CD4-positive, alpha-beta memory T cell (primary cell): ENCODE measurements at regions of chr12 and their contacts with region 1.

Region 1: DNA sequence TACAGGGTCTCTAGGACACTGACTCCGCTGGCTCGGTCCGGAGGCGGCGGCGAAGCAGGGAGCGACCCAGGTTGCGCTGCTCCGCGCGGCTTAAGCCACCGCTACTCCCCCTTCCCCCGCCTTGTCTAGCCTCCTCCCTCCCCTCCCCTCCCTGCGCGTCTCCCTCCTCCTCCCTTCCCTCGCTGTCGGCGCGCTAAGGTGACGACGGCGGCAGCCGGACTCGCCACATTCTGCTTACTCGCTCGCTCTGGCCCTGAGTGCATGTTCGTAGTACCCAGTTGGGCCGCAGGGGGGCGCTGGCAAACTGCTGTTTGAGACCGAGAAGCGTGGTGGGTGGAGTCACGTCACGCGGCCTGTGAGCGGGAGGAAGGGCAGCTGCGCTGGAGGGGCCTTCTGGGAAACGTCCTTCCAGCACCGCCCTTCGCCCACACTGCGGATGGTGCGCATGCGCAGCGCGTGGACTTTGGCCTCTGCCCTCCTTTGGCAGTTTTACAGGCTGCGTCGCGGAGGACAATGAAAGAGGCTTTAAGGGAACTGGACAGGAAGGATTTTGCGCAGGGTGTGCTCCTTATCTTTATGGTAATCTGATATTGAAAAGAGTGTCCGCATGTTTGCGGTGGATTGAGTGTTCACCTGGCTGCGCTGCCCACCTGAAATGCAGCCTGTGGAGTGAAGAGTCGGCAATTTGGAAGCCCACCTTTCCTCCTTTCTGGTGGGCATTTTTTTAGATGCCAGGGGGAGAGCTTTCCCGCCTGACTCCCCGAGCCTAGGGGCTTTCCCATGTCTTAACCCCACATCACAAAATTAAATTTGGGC is at the start of gene SCAF11:
- DNase-seq: peak; percentile 100
- H3K4me3 ChIP-seq: peak within 1 kb of the TSS; percentile 93 to 94
- H3K4me3 Mint-ChIP-seq: peak within 1 kb of the TSS; percentile 89 to 99 (median 96)
- H3K27ac ChIP-seq: peak within 1 kb of the TSS; percentile 99
- H3K27ac Mint-ChIP-seq: peak within 1 kb of the TSS; percentile 96 to 100 (median 100)
- H3K4me1 ChIP-seq: peaks cover 37% of the 10 kb centered on the region
- H3K4me1 Mint-ChIP-seq: peaks cover 36 to 59% (median 41%) of the 10 kb centered on the region in 4 donors
- H3K27me3 ChIP-seq: no peaks in the 10 kb centered on the region
- H3K27me3 Mint-ChIP-seq: peaks cover 0 to 4% of the 10 kb centered on the region in 2 donors
- total RNA-seq, gene SCAF11: 212 to 236 TPM

Region 2: DNA sequence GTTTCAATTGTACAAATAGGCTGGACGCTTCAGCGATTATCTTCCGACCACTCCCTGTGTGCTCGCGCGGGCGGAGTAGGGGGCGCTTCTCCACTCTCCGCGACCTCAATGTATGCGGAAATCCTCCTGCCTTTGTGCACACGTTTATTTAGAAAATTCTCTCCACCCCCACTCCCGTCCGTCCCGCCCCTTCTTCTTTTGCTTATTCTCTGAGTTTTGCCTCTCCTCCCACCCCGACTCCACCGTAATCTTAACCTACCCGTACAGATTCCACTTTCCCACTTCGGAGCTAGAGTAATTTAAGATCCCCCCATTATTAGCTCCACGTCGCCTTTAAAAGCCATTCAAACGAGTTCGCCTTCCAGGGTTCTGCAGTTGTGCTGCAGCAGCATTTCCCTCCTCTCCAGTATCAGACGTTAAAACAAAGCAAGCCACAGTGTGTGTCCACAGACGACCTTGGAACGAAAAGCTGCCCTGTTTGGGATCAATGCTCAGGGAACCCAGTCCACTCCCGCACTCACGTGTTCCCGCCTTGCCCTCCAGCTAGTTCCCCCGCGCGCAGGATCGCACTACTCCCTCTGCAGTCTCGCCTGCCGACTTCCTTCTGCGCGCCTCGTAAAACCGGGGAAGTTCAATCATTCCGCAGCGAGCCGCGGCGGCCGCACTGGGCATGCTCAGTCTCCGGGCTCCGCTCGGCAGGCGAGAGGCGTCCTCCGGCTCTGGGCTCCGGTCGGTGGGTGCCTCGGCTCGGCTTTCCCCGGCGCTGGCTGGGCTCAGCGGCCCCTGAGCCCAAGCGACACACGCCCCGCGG is 775.1 kb before region 1 on chr12 and contains the start of gene ANO6:
- CTCF ChIA-PET with region 1: no interaction called
- POLR2A ChIA-PET with region 1: no interaction called
- intact Hi-C with region 1: loop called (anchors 1 kb)
- DNase-seq: peak; percentile 73 to 81 (median 76)
- H3K4me3 ChIP-seq: peak within 1 kb of the TSS; percentile 68 to 94
- H3K4me3 Mint-ChIP-seq: peak within 1 kb of the TSS; percentile 92 to 99 (median 96)
- H3K27ac ChIP-seq: peak within 1 kb of the TSS; percentile 69
- H3K27ac Mint-ChIP-seq: peak within 1 kb of the TSS; percentile 81 to 98 (median 95)
- H3K4me1 ChIP-seq: peaks cover 48% of the 10 kb centered on the region
- H3K4me1 Mint-ChIP-seq: peaks cover 34 to 77% (median 53%) of the 10 kb centered on the region in 4 donors
- H3K27me3 ChIP-seq: no peaks in the 10 kb centered on the region
- H3K27me3 Mint-ChIP-seq: no peaks in the 10 kb centered on the region
- total RNA-seq, gene ANO6: 29.5 to 32.6 TPM

Region 3: DNA sequence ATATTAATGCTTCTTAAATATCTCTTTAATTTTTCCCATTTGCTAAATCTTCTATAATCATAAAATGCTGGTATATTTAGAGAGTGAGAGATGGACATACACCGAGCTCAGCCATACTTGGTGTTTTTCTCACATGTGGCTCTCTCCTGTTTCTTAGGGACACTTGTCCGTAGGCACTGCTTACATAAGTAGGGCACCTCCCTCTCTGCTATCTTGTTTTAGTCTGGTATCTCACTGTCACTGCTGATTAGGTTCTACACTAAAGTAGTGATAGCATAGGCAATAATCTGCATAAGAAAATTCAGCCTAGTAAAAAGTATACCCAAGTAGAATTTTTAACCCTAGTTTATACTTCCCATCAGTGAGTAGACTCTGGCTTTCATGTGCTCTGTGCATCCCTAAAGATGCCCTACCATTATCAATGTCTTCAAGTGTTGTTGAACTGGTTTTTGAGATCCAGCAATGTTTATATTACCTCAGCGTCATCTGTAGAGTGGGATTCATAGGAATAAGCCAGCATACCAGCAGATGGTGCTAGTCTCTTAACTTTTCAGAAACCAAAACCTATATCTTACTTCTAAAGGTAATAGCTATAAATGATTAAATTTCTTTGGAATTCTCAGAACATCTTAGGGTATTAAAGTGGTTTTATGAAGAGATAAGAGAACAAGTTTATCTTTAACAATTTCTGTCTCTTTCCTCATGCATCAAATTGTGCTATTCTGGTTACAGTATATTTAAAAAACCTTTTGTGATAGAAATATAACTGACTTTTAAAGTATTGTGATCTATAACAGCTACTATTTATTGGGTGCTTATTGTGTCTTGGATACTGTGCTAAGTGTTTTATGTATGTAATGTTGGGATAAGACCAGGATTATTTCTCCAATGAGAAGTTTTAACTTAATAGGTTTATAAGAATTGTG is 228.2 kb before region 1 on chr12:
- CTCF ChIA-PET with region 1: interaction called, 4 read pairs
- POLR2A ChIA-PET with region 1: interaction called, 3 read pairs
- intact Hi-C with region 1: loop called (anchors 5 kb)
- DNase-seq: peak in 3 of 5 donors; percentile 11 to 19 (median 13)
- H3K4me3 ChIP-seq: no peak overlapping the region
- H3K4me3 Mint-ChIP-seq: peak overlapping the region in 2 of 8 donors; percentile 5 to 29
- H3K27ac ChIP-seq: no peak overlapping the region
- H3K27ac Mint-ChIP-seq: peak overlapping the region in 3 of 7 donors; percentile 26 to 29 (median 29)
- H3K4me1 ChIP-seq: peaks cover 24% of the 10 kb centered on the region
- H3K4me1 Mint-ChIP-seq: peaks cover 32 to 59% (median 44%) of the 10 kb centered on the region in 4 donors
- H3K27me3 ChIP-seq: no peaks in the 10 kb centered on the region
- H3K27me3 Mint-ChIP-seq: no peaks in the 10 kb centered on the region

Region 4: GRCh38 chr12:46024099-46024498 is 33.4 kb after region 1 on chr12:
- CTCF ChIA-PET with region 1: no interaction called
- POLR2A ChIA-PET with region 1: no interaction called
- intact Hi-C with region 1: no loop called
- DNase-seq: no peak
- H3K4me3 ChIP-seq: no peak overlapping the region
- H3K4me3 Mint-ChIP-seq: no peak overlapping the region
- H3K27ac ChIP-seq: no peak overlapping the region
- H3K27ac Mint-ChIP-seq: no peak overlapping the region
- H3K4me1 ChIP-seq: no peaks in the 10 kb centered on the region
- H3K4me1 Mint-ChIP-seq: no peaks in the 10 kb centered on the region
- H3K27me3 ChIP-seq: no peaks in the 10 kb centered on the region
- H3K27me3 Mint-ChIP-seq: peaks cover 7 to 11% of the 10 kb centered on the region in 2 donors

Region 5: DNA sequence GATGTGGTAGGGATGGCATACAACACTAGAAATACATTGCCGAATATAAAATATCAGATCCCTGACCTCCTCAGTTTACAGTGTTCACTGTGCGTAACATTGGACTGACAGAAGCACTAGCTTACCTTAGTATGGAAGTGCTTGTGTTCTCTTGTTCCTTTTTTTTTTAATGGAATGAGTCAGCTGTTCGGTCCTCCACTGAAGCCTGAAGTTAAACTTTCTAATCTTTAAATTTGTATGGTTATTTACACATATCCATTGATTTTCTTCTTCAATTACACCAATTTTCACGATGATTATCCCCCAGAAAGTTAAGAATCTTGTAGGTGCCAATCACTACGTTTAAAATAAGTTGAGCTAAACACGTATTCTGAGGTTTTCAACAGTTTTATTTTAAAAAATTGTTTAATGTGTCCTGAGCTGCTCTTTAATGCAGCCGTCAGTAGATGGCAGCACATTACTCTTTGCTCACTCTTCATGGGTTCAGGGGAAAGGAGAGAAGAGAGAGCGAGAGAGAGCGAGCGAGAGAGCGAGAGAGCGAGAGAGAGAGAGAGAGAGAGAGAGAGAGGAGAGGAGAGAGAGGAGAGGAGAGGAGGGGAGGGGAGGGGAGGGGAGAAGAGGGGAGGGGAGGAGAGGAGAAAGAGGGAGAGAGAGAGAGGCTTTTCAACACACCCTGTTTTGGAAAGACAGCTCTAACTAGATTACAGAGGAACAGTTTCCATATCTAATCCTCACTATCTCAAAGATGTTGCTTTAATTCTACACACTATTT is 134.4 kb after region 1 on chr12:
- CTCF ChIA-PET with region 1: interaction called, 5 read pairs
- POLR2A ChIA-PET with region 1: no interaction called
- intact Hi-C with region 1: loop called (anchors 1 kb)
- DNase-seq: peak; percentile 60 to 62 (median 62)
- H3K4me3 ChIP-seq: no peak overlapping the region
- H3K4me3 Mint-ChIP-seq: peak overlapping the region; percentile 34 to 76 (median 62)
- H3K27ac ChIP-seq: no peak overlapping the region
- H3K27ac Mint-ChIP-seq: peak overlapping the region in 5 of 7 donors; percentile 85 to 95 (median 89)
- H3K4me1 ChIP-seq: peaks cover 4% of the 10 kb centered on the region
- H3K4me1 Mint-ChIP-seq: peaks cover 3 to 6% (median 4%) of the 10 kb centered on the region in 4 donors
- H3K27me3 ChIP-seq: no peaks in the 10 kb centered on the region
- H3K27me3 Mint-ChIP-seq: peaks cover 8 to 15% of the 10 kb centered on the region in 2 donors

Region 6: DNA sequence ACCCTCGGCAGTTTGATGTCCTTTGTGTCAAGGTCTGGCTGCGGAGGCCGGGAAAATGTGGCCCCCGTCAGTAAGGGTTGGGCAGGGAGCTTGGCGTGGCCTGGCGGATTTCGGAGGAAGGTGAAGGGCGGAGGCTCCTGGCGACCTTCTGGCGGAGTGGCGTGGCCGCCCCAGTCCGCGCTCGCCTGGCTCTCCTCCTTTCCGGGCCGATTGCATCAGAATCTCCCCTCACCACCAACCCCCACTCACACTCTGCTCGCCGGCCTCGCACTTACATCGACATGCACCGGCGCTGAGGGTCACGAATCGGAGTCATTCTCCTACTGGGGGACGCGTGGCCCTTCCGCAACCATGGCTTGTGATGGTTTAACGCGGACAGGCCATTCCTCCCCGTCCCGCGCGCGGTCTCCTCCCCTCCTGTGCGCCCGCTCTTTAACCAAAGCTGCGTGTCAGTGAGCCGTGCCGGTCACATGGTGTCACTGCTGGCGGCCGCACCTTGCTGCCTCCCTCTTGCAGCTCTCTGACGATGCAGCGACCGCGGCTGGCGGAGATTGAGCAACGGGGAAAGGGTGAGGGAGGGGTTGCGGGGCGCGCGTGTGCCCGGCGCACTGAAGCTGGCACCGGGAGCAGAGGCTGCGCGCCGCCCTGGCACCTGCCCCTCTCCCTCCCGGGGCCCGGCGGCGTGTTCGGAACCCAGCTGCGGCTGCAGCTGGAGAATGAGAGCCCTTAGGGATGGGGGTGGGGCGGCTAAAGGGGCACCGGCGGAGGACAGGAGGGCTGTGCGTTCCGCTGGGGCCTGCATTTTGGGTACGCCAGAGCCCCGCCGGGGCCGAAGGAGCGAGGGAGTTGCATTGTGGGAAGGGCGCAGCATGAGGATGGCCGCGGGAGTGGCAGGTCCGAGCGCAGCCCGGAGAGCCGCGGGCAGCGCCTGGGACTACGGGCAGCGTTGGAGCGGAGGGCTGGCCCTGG is 278.2 kb after region 1 on chr12 and contains the start of gene SLC38A1:
- CTCF ChIA-PET with region 1: interaction called, 3 read pairs
- POLR2A ChIA-PET with region 1: interaction called, 45 read pairs
- intact Hi-C with region 1: loop called (anchors 1 kb)
- DNase-seq: peak; percentile 88 to 96 (median 89)
- H3K4me3 ChIP-seq: peak within 1 kb of the TSS; percentile 91 to 96
- H3K4me3 Mint-ChIP-seq: no peak within 1 kb of the TSS
- H3K27ac ChIP-seq: peak within 1 kb of the TSS; percentile 95
- H3K27ac Mint-ChIP-seq: no peak within 1 kb of the TSS
- H3K4me1 ChIP-seq: peaks cover 54% of the 10 kb centered on the region
- H3K4me1 Mint-ChIP-seq: peaks cover 16 to 47% (median 23%) of the 10 kb centered on the region in 4 donors
- H3K27me3 ChIP-seq: no peaks in the 10 kb centered on the region
- H3K27me3 Mint-ChIP-seq: no peaks in the 10 kb centered on the region
- total RNA-seq, gene SLC38A1: 265 to 272 TPM

Region 7: DNA sequence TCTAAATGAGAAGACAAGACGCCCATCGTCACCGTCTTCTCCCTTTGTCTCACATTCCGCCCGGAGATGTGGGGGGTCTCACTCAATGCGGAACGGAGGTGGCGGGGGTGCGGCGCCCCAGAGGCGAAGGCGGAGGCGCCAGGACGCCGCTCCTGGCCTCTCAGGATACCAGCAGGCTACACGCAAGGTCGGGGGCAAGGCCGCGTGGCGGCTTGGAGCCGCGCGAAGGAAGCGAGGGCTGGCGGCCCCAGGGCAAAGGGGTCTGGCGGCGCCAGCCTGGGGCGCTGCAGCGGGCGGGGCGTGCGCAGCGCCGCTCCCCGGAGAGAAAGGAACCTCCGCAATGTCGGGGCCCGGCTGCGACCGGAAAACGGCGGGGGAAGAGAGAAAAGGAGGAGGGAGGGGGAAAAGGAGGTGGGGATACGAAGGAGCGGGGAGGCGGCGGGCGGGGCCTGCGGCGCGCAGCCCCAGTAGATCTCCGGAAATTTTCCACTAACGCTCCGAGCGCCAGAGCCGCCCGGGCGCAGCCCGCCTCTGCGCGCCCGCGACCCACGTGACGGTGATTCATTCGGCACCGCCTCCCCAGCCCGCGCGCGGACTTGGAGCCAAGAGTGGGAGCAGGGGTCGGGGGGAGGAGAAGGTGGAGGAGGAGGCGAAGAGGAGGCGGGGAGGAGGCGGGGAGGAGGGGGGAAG is 392.4 kb after region 1 on chr12:
- CTCF ChIA-PET with region 1: no interaction called
- POLR2A ChIA-PET with region 1: interaction called, 9 read pairs
- intact Hi-C with region 1: loop called (anchors 1 kb)
- DNase-seq: peak; percentile 88 to 95 (median 90)
- H3K4me3 ChIP-seq: peak overlapping the region; percentile 26 to 78
- H3K4me3 Mint-ChIP-seq: peak overlapping the region; percentile 82 to 94 (median 90)
- H3K27ac ChIP-seq: peak overlapping the region; percentile 83
- H3K27ac Mint-ChIP-seq: peak overlapping the region; percentile 87 to 98 (median 97)
- H3K4me1 ChIP-seq: peaks cover 19% of the 10 kb centered on the region
- H3K4me1 Mint-ChIP-seq: peaks cover 19 to 31% (median 25%) of the 10 kb centered on the region in 4 donors
- H3K27me3 ChIP-seq: no peaks in the 10 kb centered on the region
- H3K27me3 Mint-ChIP-seq: no peaks in the 10 kb centered on the region